Activated CD8-positive, alpha-beta memory T cell treated with anti-CD3 and anti-CD28 coated beads, Interleukin-2, amount 10 ng/mL, durations not matched to agents 7 days and 5 days (primary cell): ENCODE measurements at regions of chr3 and their contacts with region 1.

Region 1: GRCh38 chr3:16828815-16829214 is 55.9 kb upstream of the PLCL2 start:
- DNase-seq: peak; percentile 72
- ATAC-seq: peak; percentile 83
- H3K4me3 Mint-ChIP-seq: no peak overlapping the region
- H3K27ac Mint-ChIP-seq: no peak overlapping the region
- H3K4me1 Mint-ChIP-seq: peaks cover 18% of the 10 kb centered on the region
- H3K27me3 Mint-ChIP-seq: peaks cover 4% of the 10 kb centered on the region

Region 2: DNA sequence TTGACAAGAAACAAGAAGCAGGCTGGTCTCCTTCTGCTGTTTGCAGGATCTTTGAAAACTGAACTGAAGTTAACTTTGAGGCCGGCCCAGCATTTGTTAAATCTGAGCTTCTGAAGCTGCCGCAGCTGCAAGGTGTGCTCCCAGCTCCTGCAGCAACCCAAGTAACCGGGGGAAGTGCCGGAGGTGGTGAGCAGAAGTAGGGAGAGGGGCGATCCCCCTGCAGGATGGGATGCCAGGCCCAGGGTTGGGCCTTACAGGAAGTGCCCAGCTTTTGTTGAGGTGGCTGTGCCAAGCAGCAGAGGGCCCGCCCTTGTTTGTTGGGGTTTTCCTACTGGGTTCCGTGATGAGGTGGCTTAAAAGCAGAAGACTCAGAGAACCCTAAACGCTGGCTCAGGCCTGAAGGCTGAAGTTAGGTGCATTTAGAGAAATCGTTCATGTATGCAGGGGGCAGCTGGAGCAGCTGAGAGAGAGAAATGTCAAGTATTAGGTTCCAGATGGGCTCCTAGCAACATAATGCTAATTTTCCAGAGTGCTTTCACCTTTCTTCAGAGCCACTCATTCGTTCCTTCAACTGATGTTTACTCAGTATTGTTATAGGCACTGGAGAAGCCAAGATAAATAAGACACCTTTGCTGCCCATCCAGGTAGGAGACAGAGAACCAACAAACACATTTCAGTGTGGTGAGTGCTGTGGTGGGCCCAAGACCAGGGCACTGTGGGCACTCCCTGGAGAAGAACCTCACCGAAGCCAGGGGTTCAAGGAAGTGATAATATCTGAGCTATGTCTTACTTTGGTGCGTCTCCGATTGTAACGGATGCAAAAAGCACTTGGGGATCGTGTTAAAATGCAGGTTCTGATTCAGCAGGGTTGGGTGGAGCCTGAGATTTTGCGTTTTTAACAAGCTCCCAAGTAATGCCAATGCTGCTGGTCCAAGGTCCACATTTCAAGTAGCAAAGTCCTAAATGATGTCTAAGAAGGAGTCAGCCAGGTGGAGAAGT is 13.8 kb after region 1 on chr3:
- CTCF ChIA-PET with region 1: interaction called, 13 read pairs
- DNase-seq: peak; percentile 89
- ATAC-seq: peak; percentile 89
- H3K4me3 Mint-ChIP-seq: peak overlapping the region; percentile 64
- H3K27ac Mint-ChIP-seq: peak overlapping the region; percentile 95
- H3K4me1 Mint-ChIP-seq: peaks cover 59% of the 10 kb centered on the region
- H3K27me3 Mint-ChIP-seq: no peaks in the 10 kb centered on the region